ENCODE measurements at regions of chr5 and their contacts with region 1.

Region 1: DNA sequence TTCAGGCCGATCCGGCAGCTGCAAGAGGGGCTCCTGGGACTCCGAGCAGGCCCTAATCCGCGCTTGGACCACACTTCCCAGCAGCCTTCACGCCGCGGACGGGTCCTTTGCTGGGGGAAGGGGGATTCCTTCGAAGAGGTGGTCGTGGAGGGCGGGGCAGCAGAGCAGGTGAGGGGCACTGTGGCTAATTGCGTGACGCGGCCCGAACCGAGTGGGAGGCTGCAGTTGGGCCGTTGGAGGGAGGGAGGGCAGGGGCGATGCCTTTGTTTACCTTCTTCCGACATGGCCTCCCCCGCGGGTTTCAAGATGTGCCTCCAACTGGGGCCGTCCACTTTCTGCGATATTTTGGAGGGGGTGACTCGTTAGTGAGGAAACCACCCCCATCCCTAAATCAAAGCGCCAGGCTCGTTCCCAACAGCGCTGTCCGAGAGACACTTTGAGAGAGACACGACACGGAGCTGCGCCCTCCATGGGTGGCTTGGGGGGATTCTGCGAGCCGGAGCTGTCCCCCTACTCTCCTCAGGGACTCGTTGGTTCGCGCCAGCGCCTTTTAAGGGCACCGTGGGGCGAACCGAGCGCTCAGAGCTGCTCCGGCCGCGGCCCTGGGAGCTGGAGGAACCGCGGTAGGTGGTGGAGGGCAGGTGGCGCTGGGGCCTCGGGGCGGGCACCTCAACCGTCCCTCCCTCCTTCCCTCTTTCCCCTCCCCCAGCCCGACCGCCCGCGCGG is at the start of gene FAM53C:
- DNase-seq: peak; percentile 88 to 98 (median 91)
- ATAC-seq: peak; percentile 84
- H3K4me3 ChIP-seq: peak within 1 kb of the TSS; percentile 69 to 85
- H3K4me3 Mint-ChIP-seq: peak within 1 kb of the TSS; percentile 93
- H3K27ac ChIP-seq: peak within 1 kb of the TSS; percentile 95 to 99
- H3K27ac Mint-ChIP-seq: peak within 1 kb of the TSS; percentile 100
- H3K4me1 ChIP-seq: peaks cover 23% of the 10 kb centered on the region
- H3K4me1 Mint-ChIP-seq: peaks cover 41% of the 10 kb centered on the region
- H3K27me3 ChIP-seq: no peaks in the 10 kb centered on the region
- H3K27me3 Mint-ChIP-seq: no peaks in the 10 kb centered on the region
- CTCF ChIP-seq: no peak
- total RNA-seq, gene FAM53C: 99.8 to 99.9 TPM

Region 2: GRCh38 chr5:138096363-138096762 is 241.5 kb before region 1 on chr5:
- CTCF ChIA-PET with region 1: no interaction called
- POLR2A ChIA-PET with region 1: no interaction called
- intact Hi-C with region 1: no loop called
- DNase-seq: no peak
- ATAC-seq: no peak
- H3K4me3 ChIP-seq: no peak overlapping the region
- H3K4me3 Mint-ChIP-seq: no peak overlapping the region
- H3K27ac ChIP-seq: no peak overlapping the region
- H3K27ac Mint-ChIP-seq: peak overlapping the region; percentile 9
- H3K4me1 ChIP-seq: peaks cover 17% of the 10 kb centered on the region
- H3K4me1 Mint-ChIP-seq: peaks cover 21% of the 10 kb centered on the region
- H3K27me3 ChIP-seq: no peaks in the 10 kb centered on the region
- H3K27me3 Mint-ChIP-seq: peaks cover 11% of the 10 kb centered on the region
- CTCF ChIP-seq: no peak

Region 3: GRCh38 chr5:138213161-138214029 is 124.5 kb before region 1 on chr5 and contains the start of gene CDC23:
- CTCF ChIA-PET with region 1: no interaction called
- POLR2A ChIA-PET with region 1: interaction called, 10 read pairs
- intact Hi-C with region 1: loop called in 1 of 2 experiments (anchors 1 kb)
- DNase-seq: peak; percentile 76 to 97 (median 89)
- ATAC-seq: peak; percentile 97
- H3K4me3 ChIP-seq: peak within 1 kb of the TSS; percentile 91 to 93
- H3K4me3 Mint-ChIP-seq: peak within 1 kb of the TSS; percentile 100
- H3K27ac ChIP-seq: peak within 1 kb of the TSS; percentile 81 to 86
- H3K27ac Mint-ChIP-seq: peak within 1 kb of the TSS; percentile 98
- H3K4me1 ChIP-seq: peaks cover 18% of the 10 kb centered on the region
- H3K4me1 Mint-ChIP-seq: peaks cover 21% of the 10 kb centered on the region
- H3K27me3 ChIP-seq: no peaks in the 10 kb centered on the region
- H3K27me3 Mint-ChIP-seq: peaks cover 2% of the 10 kb centered on the region
- CTCF ChIP-seq: no peak
- total RNA-seq, gene CDC23: 18.2 to 20.5 TPM

Region 4: GRCh38 chr5:138464008-138464387 is 126.2 kb after region 1 on chr5:
- CTCF ChIA-PET with region 1: no interaction called
- POLR2A ChIA-PET with region 1: interaction called, 3 read pairs
- intact Hi-C with region 1: loop called (anchors 1 to 5 kb)
- DNase-seq: peak; percentile 85 to 98 (median 93)
- ATAC-seq: peak; percentile 47
- H3K4me3 ChIP-seq: peak overlapping the region; percentile 91 to 97
- H3K4me3 Mint-ChIP-seq: peak overlapping the region; percentile 91
- H3K27ac ChIP-seq: peak overlapping the region; percentile 79 to 100
- H3K27ac Mint-ChIP-seq: peak overlapping the region; percentile 93
- H3K4me1 ChIP-seq: peaks cover 51% of the 10 kb centered on the region
- H3K4me1 Mint-ChIP-seq: peaks cover 48% of the 10 kb centered on the region
- H3K27me3 ChIP-seq: no peaks in the 10 kb centered on the region
- H3K27me3 Mint-ChIP-seq: no peaks in the 10 kb centered on the region
- CTCF ChIP-seq: peak; percentile 87